ENCODE measurements at regions of chr2 and their contacts with region 1.

Region 1: DNA sequence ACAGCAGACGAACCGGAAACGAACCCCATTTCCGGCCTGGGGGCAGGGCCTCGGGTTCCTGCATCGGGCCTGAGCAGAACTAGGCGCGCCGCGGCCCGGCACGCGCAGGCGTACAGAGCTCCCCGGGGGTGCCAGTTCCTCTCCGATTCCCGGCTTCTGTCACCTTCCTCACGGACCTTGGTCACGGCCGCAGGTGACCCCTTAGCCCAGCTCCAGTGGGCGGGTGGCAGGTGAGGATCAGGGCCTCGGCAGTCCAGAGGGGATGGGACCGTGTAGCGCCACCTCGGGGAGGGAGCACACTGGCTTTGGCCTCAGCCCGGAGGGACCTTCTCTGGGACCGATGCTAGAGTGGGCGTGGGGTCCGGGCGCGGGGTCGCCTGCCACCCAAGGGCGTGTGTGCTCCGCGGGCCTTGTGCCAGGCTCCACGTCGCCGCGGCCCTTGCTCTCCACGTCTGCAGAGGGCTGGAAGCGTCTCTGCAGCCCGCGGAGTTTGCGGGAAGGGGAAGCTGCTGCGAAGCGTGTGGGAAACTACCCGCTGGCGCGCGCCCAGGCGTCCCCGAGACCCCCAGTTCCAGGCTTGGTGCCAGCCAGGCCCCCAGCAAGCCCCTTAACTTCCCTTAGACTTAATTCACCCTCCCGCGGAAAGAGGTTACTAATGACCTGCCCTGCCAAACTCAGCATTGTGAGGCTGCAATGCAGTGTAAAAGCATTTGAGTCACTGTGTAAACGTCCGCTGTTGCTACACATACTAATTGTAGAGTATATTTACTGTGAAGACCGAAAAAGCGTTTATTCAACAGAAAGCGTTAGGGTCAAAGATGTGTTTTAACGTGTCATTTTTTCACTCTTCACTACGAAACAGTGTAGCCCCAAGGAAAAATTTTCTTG is at the start of gene TRAPPC12:
- DNase-seq: peak; percentile 89 to 95
- ATAC-seq: peak; percentile 88 to 91 (median 89)
- H3K4me3 ChIP-seq: peak within 1 kb of the TSS; percentile 92
- H3K27ac ChIP-seq: peak within 1 kb of the TSS; percentile 98
- H3K4me1 ChIP-seq: peaks cover 34% of the 10 kb centered on the region
- H3K27me3 ChIP-seq: no peaks in the 10 kb centered on the region
- CTCF ChIP-seq: peak; percentile 42
- total RNA-seq, gene TRAPPC12: 56.7 to 90.3 (median 66.9) TPM

Region 2: GRCh38 chr2:2613279-2614199 is 766.4 kb before region 1 on chr2:
- intact Hi-C with region 1: loop called in 1 of 2 experiments (anchors 10 kb)
- DNase-seq: peak; percentile 89 to 96
- ATAC-seq: peak; percentile 99 to 100 (median 100)
- H3K4me3 ChIP-seq: peak overlapping the region; percentile 69
- H3K27ac ChIP-seq: peak overlapping the region; percentile 92
- H3K4me1 ChIP-seq: no peaks in the 10 kb centered on the region
- H3K27me3 ChIP-seq: peaks cover 0 to 2% (median 0%) of the 10 kb centered on the region in 3 donors
- CTCF ChIP-seq: no peak

Region 3: DNA sequence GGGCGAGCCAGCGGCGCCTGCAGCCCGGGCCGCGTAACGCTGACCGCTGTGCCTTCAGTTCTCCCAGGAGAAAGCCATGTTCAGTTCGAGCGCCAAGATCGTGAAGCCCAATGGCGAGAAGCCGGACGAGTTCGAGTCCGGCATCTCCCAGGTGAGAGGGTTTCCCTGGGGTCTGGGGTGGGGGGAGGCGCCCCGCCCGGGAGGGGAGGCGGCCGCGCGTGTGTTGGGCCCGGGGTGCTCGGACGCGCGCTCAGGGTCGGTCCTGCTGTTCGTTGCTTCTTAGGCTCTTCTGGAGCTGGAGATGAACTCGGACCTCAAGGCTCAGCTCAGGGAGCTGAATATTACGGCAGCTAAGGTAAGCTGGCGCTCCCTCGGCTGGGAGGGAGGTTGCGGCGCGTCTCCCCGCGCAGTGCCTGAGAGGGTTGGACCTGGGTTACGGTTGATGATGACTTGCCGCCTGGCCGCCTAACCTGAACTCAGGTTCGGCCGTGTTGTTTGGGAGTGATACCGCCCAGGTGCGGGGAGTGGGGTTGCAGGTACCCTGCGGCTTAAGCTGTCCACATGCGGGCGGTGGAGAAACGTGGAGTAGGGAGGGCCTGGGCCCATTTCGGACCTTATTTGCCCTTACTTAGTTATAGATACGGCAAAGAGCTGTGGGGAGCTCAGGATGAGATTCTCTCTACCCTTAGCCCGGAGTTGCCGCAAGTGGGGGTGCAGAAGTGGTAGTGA is 195.8 kb after region 1 on chr2:
- intact Hi-C with region 1: loop called in 1 of 2 experiments (anchors 10 kb)
- DNase-seq: peak in 1 of 2 donors; percentile 23
- ATAC-seq: peak; percentile 25 to 54 (median 42)
- H3K4me3 ChIP-seq: peak overlapping the region; percentile 92
- H3K27ac ChIP-seq: peak overlapping the region; percentile 84
- H3K4me1 ChIP-seq: peaks cover 27% of the 10 kb centered on the region
- H3K27me3 ChIP-seq: no peaks in the 10 kb centered on the region
- CTCF ChIP-seq: no peak

Region 4: GRCh38 chr2:3902131-3902530 is 522.2 kb after region 1 on chr2:
- intact Hi-C with region 1: no loop called
- DNase-seq: no peak
- ATAC-seq: no peak
- H3K4me3 ChIP-seq: no peak overlapping the region
- H3K27ac ChIP-seq: no peak overlapping the region
- H3K4me1 ChIP-seq: no peaks in the 10 kb centered on the region
- H3K27me3 ChIP-seq: no peaks in the 10 kb centered on the region
- CTCF ChIP-seq: no peak